ENCODE measurements at regions of chr2 and their contacts with region 1.

Region 1: GRCh38 chr2:64144057-64145013 is at the start of gene PELI1:
- DNase-seq: peak; percentile 93 to 95 (median 95)
- H3K4me3 ChIP-seq: peak within 1 kb of the TSS; percentile 77 to 99 (median 88)
- H3K4me3 Mint-ChIP-seq: peak within 1 kb of the TSS; percentile 95 to 99
- H3K27ac ChIP-seq: peak within 1 kb of the TSS; percentile 79 to 88
- H3K27ac Mint-ChIP-seq: peak within 1 kb of the TSS; percentile 90 to 97 (median 94)
- H3K4me1 ChIP-seq: peaks cover 14 to 41% of the 10 kb centered on the region in 2 donors
- H3K4me1 Mint-ChIP-seq: peaks cover 32% of the 10 kb centered on the region
- H3K27me3 ChIP-seq: no peaks in the 10 kb centered on the region
- H3K27me3 Mint-ChIP-seq: peaks cover 0 to 3% (median 0%) of the 10 kb centered on the region in 3 donors
- CTCF ChIP-seq: no peak
- polyA plus RNA-seq, gene PELI1: 44.7 to 106 (median 53.6) TPM

Region 2: DNA sequence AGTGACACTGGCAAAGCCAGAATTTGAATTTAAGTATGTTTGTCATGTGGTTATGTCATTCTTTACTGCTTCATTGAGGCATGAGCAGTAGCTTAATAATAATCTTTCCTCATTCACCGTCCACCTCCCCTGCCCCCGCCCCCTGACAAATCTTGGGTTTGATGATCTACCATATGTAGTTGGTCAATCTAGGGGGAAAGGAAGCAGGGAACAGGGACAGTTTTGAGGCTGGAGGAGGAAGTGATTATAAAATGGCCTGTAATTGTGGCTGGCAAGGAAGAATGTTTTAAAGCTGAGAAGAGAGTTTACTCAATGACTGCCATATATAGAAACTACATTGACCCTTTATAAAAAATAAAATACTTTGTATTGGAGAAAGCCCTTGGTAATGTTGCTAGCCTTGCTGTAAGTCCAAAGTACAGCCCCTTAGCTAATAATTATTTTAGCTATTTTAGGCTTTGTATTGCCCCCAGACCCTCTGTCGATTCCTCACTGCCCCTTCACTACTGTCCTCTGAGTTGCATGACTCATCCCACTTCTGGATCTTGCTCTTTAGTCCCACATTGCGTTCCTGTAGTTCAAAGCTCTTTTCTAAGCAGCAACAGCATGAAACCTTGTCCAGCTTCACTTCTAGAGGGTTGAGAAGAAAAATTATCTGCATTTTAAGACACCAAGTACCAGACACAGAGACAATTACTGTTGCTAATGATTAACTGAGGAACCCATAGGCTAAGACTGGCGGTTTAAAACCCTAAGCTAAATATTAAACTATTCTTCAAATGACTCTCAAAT is 38.5 kb before region 1 on chr2:
- intact Hi-C with region 1: no loop called
- DNase-seq: peak in 1 of 3 donors; percentile 4
- H3K4me3 ChIP-seq: no peak overlapping the region
- H3K4me3 Mint-ChIP-seq: no peak overlapping the region
- H3K27ac ChIP-seq: peak overlapping the region in 1 of 2 donors; percentile 59
- H3K27ac Mint-ChIP-seq: peak overlapping the region in 5 of 7 donors; percentile 17 to 83 (median 65)
- H3K4me1 ChIP-seq: peaks cover 6 to 12% of the 10 kb centered on the region in 2 donors
- H3K4me1 Mint-ChIP-seq: peaks cover 19% of the 10 kb centered on the region
- H3K27me3 ChIP-seq: no peaks in the 10 kb centered on the region
- H3K27me3 Mint-ChIP-seq: peaks cover 0 to 1% (median 0%) of the 10 kb centered on the region in 3 donors
- CTCF ChIP-seq: no peak

Region 3: GRCh38 chr2:64192125-64192479 is 47.8 kb after region 1 on chr2:
- intact Hi-C with region 1: loop called in 1 of 2 experiments (anchors 5 kb)
- DNase-seq: peak; percentile 80 to 95 (median 95)
- H3K4me3 ChIP-seq: peak overlapping the region in 2 of 3 experiments; percentile 16 to 50
- H3K4me3 Mint-ChIP-seq: peak overlapping the region; percentile 17 to 60
- H3K27ac ChIP-seq: peak overlapping the region; percentile 75 to 90
- H3K27ac Mint-ChIP-seq: peak overlapping the region; percentile 91 to 99 (median 97)
- H3K4me1 ChIP-seq: peaks cover 59 to 66% of the 10 kb centered on the region in 2 donors
- H3K4me1 Mint-ChIP-seq: peaks cover 68% of the 10 kb centered on the region
- H3K27me3 ChIP-seq: no peaks in the 10 kb centered on the region
- H3K27me3 Mint-ChIP-seq: peaks cover 0 to 3% (median 2%) of the 10 kb centered on the region in 3 donors
- CTCF ChIP-seq: no peak

Region 4: DNA sequence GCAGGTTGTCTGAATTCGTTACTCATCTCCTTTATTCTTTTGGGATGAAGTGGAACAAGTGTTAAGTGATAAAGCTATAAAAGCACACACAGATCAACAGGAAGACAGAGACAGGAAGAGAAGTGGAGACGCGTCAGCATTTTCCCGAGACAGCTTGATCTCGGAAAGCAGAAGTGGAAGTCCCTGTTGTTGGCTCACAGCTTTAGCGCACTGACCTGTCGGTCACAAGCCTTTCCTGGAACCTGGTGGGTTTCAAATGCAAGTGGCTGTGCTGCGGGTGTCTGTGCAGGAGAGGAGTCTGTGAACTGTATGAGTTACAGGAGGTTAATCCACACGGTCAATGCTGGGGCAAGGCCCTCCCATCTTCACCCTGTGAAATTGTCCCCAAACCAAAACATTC is 116.5 kb after region 1 on chr2:
- intact Hi-C with region 1: loop called in 1 of 2 experiments (anchors 10 kb)
- DNase-seq: peak; percentile 84 to 94 (median 93)
- H3K4me3 ChIP-seq: peak overlapping the region; percentile 9 to 48 (median 20)
- H3K4me3 Mint-ChIP-seq: peak overlapping the region; percentile 62 to 81
- H3K27ac ChIP-seq: peak overlapping the region; percentile 85 to 97
- H3K27ac Mint-ChIP-seq: peak overlapping the region; percentile 96 to 99 (median 98)
- H3K4me1 ChIP-seq: peaks cover 57 to 67% of the 10 kb centered on the region in 2 donors
- H3K4me1 Mint-ChIP-seq: peaks cover 70% of the 10 kb centered on the region
- H3K27me3 ChIP-seq: no peaks in the 10 kb centered on the region
- H3K27me3 Mint-ChIP-seq: peaks cover 0 to 2% (median 0%) of the 10 kb centered on the region in 3 donors
- CTCF ChIP-seq: no peak

Measured in CD14-positive monocyte (primary cell).